ENCODE measurements at regions of chr16 and their contacts with region 1.

Region 1: DNA sequence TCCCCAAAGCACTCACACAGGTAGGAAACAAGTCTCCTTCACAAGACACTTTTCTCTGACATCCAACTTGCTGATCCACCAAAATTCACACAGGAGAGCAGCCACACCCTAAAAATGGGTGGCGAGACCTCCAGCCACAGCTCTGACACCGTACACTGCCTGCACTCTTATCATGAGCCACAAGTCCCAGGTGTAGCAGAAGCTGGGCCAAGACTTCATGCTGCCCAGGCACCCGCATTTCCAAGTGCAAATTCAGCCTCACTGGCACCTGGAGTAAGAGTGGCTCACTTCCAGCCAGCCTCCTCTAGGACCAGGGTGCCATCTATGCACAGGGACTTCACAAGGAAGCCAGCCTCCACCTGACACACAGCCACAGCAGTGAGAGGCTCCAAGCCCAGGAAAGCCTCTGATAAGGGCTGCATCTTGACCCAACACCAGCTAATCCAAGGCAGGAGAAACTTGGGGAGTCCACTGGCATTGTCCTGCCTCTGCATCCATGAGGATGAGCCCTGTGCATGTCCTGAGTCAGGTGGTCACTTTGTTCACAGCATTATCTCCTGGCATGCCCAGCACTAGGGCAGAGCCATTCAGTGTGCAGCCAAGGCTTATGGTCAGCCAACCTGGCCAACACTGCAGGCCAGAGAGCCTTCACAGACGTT is 2.6 kb upstream of the ZNF768 start:
- DNase-seq: no peak
- H3K4me3 ChIP-seq: no peak overlapping the region
- H3K27ac ChIP-seq: peak overlapping the region in 1 of 2 experiments; percentile 88
- H3K4me1 ChIP-seq: peaks cover 6 to 40% (median 32%) of the 10 kb centered on the region in 4 experiments
- H3K27me3 ChIP-seq: no peaks in the 10 kb centered on the region

Region 2: DNA sequence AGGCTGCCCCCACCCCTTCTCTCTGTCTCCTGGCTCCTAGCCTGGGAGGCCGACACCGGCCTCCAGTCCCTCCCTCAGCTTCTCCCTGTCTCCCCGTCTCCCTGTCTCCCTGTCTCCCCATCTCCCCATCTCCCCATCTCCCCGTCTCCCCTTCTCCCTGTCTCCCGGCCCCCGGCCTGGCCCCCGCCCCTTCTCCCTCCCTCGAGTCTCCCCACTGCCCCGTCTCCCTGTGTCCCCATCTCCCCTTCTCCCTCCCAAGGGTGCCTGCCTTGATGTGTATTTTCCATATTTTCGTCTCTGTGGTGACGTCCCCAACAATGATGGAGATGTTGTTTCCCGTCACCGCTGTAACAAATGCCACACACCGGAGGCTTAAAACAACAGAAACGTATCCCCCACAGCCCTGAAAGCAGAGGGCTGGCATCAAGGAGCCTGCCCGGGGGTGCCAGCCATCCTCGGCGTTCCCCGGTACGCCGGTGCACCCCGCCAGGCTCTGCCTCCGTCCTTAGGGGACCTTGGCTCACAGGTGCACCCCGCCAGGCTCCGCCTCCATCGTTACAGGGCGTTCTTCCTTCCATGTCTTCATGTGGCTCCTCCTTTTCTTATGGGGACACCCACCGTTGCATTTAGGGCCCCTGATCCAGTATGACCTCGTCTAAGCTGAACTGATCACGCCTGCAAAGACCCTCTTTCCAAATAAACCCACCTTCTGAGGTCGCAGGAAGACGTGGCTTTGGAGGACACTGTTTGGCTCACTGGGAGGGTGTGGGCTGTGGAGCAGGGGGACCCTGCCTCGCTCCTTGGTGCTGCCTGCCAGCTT is 1274.0 kb before region 1 on chr16:
- CTCF ChIA-PET with region 1: no interaction called
- POLR2A ChIA-PET with region 1: interaction called, 10 read pairs
- DNase-seq: no peak
- H3K4me3 ChIP-seq: no peak overlapping the region
- H3K27ac ChIP-seq: no peak overlapping the region
- H3K4me1 ChIP-seq: no peaks in the 10 kb centered on the region
- H3K27me3 ChIP-seq: no peaks in the 10 kb centered on the region

Region 3: DNA sequence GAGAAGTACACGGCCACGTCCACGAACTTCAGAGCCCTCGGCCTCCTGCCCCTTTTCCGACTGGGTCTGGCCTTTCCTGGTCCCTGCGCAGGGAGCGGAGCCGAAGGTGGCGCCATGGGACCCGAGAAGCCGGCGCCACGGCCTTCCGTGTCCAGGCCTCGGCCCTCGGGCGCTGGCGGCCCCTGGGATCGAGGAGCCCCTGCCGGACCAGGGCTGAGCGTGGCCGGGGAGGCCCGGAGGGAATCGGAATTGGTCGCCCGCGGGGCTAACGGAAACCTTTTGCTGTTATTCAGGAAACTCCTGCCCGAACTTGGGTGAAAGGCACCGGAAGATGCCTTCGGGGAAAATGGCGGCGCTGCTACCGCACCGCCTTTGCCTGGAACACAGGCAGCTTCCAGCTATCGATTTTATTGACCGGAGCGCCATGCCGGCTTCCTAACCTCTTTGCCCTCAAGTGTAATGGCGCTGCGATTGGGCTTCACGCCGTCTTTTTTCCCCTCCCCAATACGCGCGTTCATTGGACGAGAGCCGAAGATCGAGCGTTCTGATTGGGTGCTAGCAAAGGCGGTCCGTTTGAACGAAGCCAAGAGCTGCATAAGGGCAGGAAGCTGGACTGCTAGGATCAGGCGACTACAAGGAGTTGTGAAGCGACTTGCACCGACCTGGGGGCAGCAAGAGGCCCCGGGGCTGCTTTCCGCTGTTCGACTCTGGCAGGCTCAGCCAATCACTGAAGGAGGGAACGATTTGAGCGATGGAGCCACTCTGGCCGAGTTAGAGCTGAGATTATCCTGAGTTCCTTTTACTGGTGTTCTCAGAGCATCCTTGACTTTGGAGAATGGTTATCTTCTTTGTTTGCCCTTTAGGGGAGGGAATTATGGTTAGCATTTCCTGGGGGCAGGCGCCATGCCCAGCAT is 81.3 kb after region 1 on chr16 and contains the start of gene ZNF689:
- CTCF ChIA-PET with region 1: no interaction called
- POLR2A ChIA-PET with region 1: no interaction called
- DNase-seq: peak; percentile 96 to 97 (median 97)
- H3K4me3 ChIP-seq: peak within 1 kb of the TSS; percentile 71 to 96 (median 87)
- H3K27ac ChIP-seq: peak within 1 kb of the TSS; percentile 97 to 98
- H3K4me1 ChIP-seq: peaks cover 1 to 20% (median 11%) of the 10 kb centered on the region in 4 experiments
- H3K27me3 ChIP-seq: no peaks in the 10 kb centered on the region

Measured in common myeloid progenitor, CD34-positive (primary cell).